Dendritic cell treated with granulocyte-macrophage colony-stimulating factor and Interleukin-4, amounts not matched to agents 40 ng/mL and 50 ng/mL, for 4 days (primary cell): ENCODE measurements at regions of chr17 and their contacts with region 1.

Region 1: GRCh38 chr17:1628856-1629646 is 417 bp upstream of the SLC43A2 start:
- H3K4me3 Mint-ChIP-seq: peak overlapping the region; percentile 98
- H3K27ac Mint-ChIP-seq: peak overlapping the region; percentile 93
- H3K4me1 Mint-ChIP-seq: peaks cover 55% of the 10 kb centered on the region
- H3K27me3 Mint-ChIP-seq: no peaks in the 10 kb centered on the region

Region 2: DNA sequence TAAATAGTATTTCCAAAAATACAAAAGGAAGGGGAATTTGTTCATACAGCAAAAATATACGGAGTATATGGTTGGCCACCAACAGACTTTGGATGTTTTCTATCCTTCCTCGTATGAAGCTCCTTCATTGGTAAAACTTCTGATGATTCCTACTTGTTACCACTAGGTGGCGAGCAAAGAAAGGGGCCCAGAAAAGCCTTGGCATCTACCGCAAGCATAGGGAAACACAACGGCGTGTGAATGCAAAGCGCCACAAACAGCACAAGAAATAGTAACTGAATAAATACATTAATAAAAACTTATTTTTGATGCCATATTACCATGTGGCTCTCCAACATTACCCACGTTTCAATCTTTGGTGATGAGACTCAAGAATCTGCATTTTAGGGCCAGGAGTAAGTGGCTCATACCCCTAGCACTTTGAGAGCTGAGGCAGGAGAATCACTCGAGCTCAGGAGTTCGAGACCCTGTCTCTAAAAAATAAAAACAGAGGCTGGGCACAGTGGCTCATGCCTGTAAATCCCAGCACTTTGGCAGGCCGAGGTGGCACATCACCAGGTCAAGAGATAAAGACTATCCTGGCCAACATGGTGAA is 263.5 kb before region 1 on chr17:
- intact Hi-C with region 1: loop called (anchors 10 kb)
- H3K4me3 Mint-ChIP-seq: no peak overlapping the region
- H3K27ac Mint-ChIP-seq: no peak overlapping the region
- H3K4me1 Mint-ChIP-seq: peaks cover 49% of the 10 kb centered on the region
- H3K27me3 Mint-ChIP-seq: no peaks in the 10 kb centered on the region

Region 3: DNA sequence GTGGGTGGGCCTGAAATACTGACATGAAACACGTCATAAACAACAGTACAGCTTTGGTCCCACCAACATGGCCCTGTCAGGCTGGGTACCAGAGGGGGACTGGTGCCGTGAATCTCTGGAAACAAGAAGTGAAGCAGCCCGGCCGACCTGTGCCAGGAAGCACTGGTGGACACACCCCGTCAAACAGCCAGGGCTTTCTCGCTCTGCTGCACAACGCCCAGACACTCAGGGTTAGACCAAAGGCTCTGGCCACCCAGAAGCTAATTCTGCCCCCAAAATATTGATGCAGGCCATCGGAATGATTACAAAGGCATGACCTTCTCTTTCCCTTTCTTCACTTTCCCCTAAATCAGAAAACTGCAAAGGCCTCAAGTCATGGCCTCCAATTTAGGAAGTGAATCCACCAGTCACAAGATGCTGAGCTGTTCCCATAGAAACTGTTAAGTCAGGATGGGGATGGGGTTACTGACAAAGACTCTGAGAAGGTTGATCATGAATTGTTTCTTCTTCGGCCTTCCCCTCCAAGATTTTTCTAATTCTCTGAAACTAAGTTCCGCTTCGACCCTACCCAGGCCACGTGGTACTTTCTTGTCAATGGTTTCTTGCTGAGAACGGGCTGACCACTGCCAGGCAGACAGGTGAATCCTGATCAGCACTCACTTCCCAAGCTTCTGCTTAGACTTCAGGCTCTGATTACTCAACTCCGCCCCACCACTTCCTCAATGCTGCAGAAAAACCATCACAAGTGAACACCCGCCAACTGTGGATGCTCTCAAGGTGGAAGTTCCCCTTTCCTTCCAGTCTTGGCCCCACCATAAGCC is 73.2 kb before region 1 on chr17:
- intact Hi-C with region 1: loop called (anchors 5 kb)
- H3K4me3 Mint-ChIP-seq: peak overlapping the region; percentile 61
- H3K27ac Mint-ChIP-seq: peak overlapping the region; percentile 84
- H3K4me1 Mint-ChIP-seq: peaks cover 75% of the 10 kb centered on the region
- H3K27me3 Mint-ChIP-seq: no peaks in the 10 kb centered on the region

Region 4: DNA sequence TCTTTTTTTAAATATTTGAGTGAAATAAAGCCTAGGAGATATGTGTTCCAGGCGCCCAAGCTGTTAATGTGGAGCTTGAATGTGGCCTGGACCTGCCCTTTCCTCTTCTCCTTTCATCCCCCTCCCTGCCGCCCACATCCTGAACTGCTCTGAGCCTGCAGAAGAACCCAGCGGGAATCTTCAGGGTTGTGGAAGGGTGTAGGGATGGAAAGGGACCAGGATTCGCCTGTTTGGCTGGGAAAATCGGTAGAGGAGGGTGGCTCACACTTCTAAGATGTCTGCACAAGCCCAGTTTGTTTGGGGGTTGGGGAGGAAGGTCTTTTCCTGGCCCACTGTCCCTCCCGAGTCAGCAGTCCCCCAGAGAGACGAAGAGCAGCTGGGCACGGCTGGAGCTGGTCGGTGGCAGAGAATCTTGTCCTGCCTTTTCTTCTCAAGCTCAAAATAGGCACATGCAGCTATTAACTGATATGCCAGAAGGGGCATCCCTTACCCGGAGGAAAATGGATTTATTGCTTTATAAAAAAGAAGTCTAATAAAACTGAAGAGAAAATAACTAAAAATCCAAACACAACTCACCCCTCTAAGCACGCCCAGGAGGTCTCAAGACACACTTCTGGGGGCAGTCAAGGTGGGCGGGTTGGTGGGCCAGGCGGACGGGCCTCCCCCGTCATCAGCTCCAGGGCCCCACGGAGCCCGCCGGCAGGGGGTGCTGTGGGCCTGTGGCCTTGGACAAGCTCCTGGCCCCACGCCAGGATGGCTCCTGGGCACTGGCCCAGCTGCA is 54.9 kb before region 1 on chr17:
- intact Hi-C with region 1: loop called (anchors 1 kb)
- H3K4me3 Mint-ChIP-seq: peak overlapping the region; percentile 14
- H3K27ac Mint-ChIP-seq: peak overlapping the region; percentile 99
- H3K4me1 Mint-ChIP-seq: peaks cover 83% of the 10 kb centered on the region
- H3K27me3 Mint-ChIP-seq: no peaks in the 10 kb centered on the region

Region 5: GRCh38 chr17:1590031-1590748 is 38.9 kb before region 1 on chr17:
- intact Hi-C with region 1: loop called (anchors 5 kb)
- H3K4me3 Mint-ChIP-seq: peak overlapping the region; percentile 26
- H3K27ac Mint-ChIP-seq: peak overlapping the region; percentile 84
- H3K4me1 Mint-ChIP-seq: peaks cover 79% of the 10 kb centered on the region
- H3K27me3 Mint-ChIP-seq: no peaks in the 10 kb centered on the region

Region 6: GRCh38 chr17:1611715-1612114 is 17.3 kb before region 1 on chr17:
- intact Hi-C with region 1: loop called (anchors 1 kb)
- H3K4me3 Mint-ChIP-seq: peak overlapping the region; percentile 48
- H3K27ac Mint-ChIP-seq: peak overlapping the region; percentile 90
- H3K4me1 Mint-ChIP-seq: peaks cover 74% of the 10 kb centered on the region
- H3K27me3 Mint-ChIP-seq: no peaks in the 10 kb centered on the region

Region 7: GRCh38 chr17:1648963-1649843 is 20.2 kb after region 1 on chr17:
- intact Hi-C with region 1: loop called (anchors 1 kb)
- H3K4me3 Mint-ChIP-seq: peak overlapping the region; percentile 83
- H3K27ac Mint-ChIP-seq: peak overlapping the region; percentile 90
- H3K4me1 Mint-ChIP-seq: peaks cover 77% of the 10 kb centered on the region
- H3K27me3 Mint-ChIP-seq: no peaks in the 10 kb centered on the region